ENCODE measurements at regions of chr2 and their contacts with region 1.

Region 1: DNA sequence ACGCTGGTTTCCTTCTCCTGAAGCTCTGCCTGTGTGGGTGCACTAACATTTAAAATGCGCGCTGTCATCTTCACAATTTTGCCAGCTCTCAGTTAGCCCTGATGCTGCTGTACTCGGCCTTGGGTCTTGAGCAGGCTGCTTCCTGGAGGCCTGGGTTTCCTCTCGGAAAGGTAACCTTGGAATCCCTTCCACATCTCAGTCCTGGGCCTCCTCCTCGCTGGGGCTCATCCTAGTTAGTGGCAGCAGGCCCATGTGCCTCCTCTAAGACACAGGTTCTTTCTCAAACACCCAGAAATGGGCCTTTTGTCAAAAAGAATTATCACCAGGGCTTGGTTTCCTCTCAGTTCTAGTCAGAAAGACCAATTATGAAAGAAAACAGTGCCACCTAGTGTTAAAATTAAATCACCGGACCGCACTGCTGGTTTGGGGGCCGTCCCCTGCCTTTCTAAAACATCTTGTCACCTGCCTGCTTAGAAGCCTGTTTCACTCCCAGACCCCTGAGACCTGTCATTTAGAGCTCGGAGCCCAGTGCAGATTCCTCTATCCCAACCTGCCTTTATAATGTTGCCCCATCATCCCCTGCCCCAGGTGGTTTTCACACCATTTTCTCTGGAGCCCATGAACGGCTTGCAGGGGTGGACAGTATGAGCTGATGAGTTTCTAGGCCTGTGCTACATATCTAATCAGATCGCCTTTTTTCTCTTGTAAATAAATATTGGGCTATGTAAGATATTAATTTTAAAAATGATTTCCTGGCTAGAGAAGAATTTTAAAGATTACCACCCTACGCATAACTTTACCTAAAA is 42.4 kb downstream of the HK2 start:
- DNase-seq: no peak
- H3K4me3 ChIP-seq: no peak overlapping the region
- H3K27ac ChIP-seq: peak overlapping the region; percentile 47 to 54 (median 48)
- H3K4me1 ChIP-seq: peaks cover 3 to 17% (median 6%) of the 10 kb centered on the region in 4 donors
- H3K27me3 ChIP-seq: no peaks in the 10 kb centered on the region
- CTCF ChIP-seq: peak; percentile 64 to 75 (median 68)
- EP300 ChIP-seq: no peak
- POLR2A ChIP-seq: no peak

Region 2: GRCh38 chr2:74703373-74703772 is 172.9 kb before region 1 on chr2:
- in situ Hi-C with region 1: loop called in 1 of 4 experiments (anchors 5 kb)
- intact Hi-C with region 1: no loop called
- DNase-seq: no peak
- H3K4me3 ChIP-seq: no peak overlapping the region
- H3K27ac ChIP-seq: no peak overlapping the region
- H3K4me1 ChIP-seq: peaks cover 0 to 12% (median 4%) of the 10 kb centered on the region in 4 donors
- H3K27me3 ChIP-seq: no peaks in the 10 kb centered on the region
- CTCF ChIP-seq: no peak
- EP300 ChIP-seq: no peak
- POLR2A ChIP-seq: no peak

Region 3: GRCh38 chr2:74715078-74715791 is 161.0 kb before region 1 on chr2:
- in situ Hi-C with region 1: loop called in 3 of 4 experiments (anchors 5 to 10 kb)
- intact Hi-C with region 1: loop called (anchors 1 kb)
- DNase-seq: peak; percentile 89
- H3K4me3 ChIP-seq: peak overlapping the region; percentile 19 to 66 (median 55)
- H3K27ac ChIP-seq: peak overlapping the region; percentile 77 to 83 (median 81)
- H3K4me1 ChIP-seq: peaks cover 0 to 26% (median 8%) of the 10 kb centered on the region in 4 donors
- H3K27me3 ChIP-seq: no peaks in the 10 kb centered on the region
- CTCF ChIP-seq: peak; percentile 84 to 95 (median 90)
- EP300 ChIP-seq: no peak
- POLR2A ChIP-seq: no peak

Region 4: DNA sequence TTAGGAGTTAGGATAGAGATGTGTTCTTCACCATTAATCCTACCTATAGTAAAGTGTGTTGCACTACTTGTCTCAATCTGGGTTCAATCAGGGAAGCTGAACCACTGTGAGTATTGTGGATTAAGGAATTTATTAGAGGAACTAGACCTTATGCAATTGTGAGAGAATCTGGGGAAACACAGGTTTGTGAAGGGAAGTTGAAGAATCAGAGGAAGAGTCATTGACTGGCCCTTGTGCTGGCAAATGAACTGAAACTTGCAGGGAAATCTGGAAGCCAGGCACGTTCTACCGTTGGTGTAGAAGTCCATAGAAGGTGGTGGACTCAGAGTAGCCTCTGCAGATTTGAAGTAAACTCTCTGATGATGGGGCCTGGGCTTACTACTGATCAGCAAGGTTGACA is 87.0 kb before region 1 on chr2:
- in situ Hi-C with region 1: no loop called
- intact Hi-C with region 1: no loop called
- DNase-seq: no peak
- H3K4me3 ChIP-seq: no peak overlapping the region
- H3K27ac ChIP-seq: no peak overlapping the region
- H3K4me1 ChIP-seq: no peaks in the 10 kb centered on the region
- H3K27me3 ChIP-seq: no peaks in the 10 kb centered on the region
- CTCF ChIP-seq: no peak
- EP300 ChIP-seq: no peak
- POLR2A ChIP-seq: no peak

Region 5: DNA sequence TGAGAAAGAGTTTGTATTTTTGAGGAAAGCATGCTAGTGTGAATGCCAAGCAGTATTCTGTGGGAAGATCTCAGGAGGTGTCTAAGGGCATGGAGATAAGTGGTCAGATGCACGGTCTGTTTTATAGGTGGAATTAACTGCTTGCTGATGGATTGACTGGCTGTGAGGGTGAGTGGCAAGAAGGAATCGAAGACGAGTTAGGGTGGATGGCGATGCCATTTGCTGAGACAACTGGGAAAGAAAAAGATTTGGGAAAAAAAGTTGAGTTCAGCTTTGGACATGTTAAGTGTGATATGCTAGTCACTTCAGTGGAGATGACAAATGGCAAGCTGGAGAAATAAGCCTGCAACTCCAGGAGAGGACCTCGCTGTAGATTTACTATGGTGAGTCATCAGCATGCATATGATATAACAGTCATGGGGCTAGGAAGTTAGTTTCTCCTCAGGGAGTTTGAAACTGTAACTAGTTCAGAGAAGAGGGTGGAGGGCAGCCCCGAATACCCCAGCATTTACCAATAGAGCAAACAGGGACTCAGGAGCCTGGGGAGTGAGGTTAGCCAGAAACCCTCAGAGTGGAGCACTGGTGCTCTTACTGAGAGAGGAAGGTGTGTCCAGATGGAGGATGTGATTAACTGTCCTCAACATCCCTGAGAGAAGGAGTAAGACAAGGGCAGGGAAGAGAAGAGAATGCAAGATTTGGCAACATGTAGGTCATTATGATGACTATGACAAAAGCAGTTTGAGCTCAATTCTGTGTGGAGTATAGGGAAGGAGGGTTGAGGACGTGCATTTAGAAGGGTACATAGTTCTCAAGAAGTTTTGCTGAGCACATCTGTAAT is 44.4 kb before region 1 on chr2:
- in situ Hi-C with region 1: no loop called
- intact Hi-C with region 1: no loop called
- DNase-seq: no peak
- H3K4me3 ChIP-seq: no peak overlapping the region
- H3K27ac ChIP-seq: no peak overlapping the region
- H3K4me1 ChIP-seq: peaks cover 0 to 22% (median 6%) of the 10 kb centered on the region in 4 donors
- H3K27me3 ChIP-seq: peaks cover 5% of the 10 kb centered on the region
- CTCF ChIP-seq: no peak
- EP300 ChIP-seq: no peak
- POLR2A ChIP-seq: no peak